ENCODE measurements at regions of chr18 and their contacts with region 1.

Region 1: GRCh38 chr18:76252880-76253279 is 242.2 kb downstream of the ZNF516 start:
- DNase-seq: no peak
- ATAC-seq: no peak
- H3K4me3 ChIP-seq: no peak overlapping the region
- H3K4me3 Mint-ChIP-seq: no peak overlapping the region
- H3K27ac ChIP-seq: no peak overlapping the region
- H3K27ac Mint-ChIP-seq: no peak overlapping the region
- H3K4me1 ChIP-seq: no peaks in the 10 kb centered on the region
- H3K4me1 Mint-ChIP-seq: no peaks in the 10 kb centered on the region
- H3K27me3 ChIP-seq: no peaks in the 10 kb centered on the region
- H3K27me3 Mint-ChIP-seq: peaks cover 9 to 17% (median 10%) of the 10 kb centered on the region in 5 donors

Region 2: DNA sequence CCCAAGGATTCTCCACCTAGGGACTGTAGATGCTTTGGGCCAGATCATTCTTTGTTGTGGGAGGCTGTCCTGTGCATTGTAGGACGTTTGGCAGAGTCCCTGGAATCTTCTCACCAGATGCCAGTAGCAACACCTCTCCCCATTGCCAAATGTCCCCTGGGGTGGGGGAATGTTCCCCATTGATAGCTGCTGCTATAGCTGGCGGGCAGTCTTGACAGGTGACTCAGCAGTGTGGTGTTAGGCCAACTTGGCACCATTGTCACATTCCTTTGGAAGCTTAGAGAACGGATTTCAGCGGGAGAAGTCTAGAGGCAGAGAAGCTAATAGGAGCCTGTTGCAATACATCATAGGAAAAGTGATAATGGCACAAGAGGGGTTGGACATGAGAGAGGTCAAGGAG is 329.7 kb before region 1 on chr18:
- CTCF ChIA-PET with region 1: no interaction called
- POLR2A ChIA-PET with region 1: no interaction called
- intact Hi-C with region 1: no loop called
- DNase-seq: no peak
- ATAC-seq: no peak
- H3K4me3 ChIP-seq: no peak overlapping the region
- H3K4me3 Mint-ChIP-seq: no peak overlapping the region
- H3K27ac ChIP-seq: no peak overlapping the region
- H3K27ac Mint-ChIP-seq: no peak overlapping the region
- H3K4me1 ChIP-seq: no peaks in the 10 kb centered on the region
- H3K4me1 Mint-ChIP-seq: no peaks in the 10 kb centered on the region
- H3K27me3 ChIP-seq: no peaks in the 10 kb centered on the region
- H3K27me3 Mint-ChIP-seq: peaks cover 0 to 20% (median 11%) of the 10 kb centered on the region in 5 donors

Region 3: DNA sequence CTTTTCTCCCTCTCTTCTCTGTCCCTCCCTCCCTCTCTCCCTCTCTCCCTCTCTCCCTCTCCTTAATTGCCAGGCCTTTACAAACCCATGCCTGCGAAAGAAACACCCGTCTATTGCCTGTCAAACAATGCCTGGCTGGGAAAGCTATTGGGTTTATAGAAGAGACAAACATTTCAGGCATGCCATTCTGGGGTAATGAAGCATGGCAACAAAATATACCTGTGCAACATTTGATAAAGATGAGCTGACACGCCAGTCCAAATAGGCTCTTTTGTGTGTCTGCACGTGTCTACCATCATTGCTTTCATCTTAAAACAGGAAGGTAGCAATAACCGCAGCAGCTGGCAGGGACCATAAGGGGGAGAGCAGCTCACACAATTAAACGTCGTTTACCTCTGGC is 39.9 kb before region 1 on chr18:
- CTCF ChIA-PET with region 1: no interaction called
- POLR2A ChIA-PET with region 1: no interaction called
- intact Hi-C with region 1: loop called in 1 of 2 experiments (anchors 2 kb)
- DNase-seq: peak in 6 of 9 donors; percentile 14 to 61 (median 44)
- ATAC-seq: peak; percentile 60
- H3K4me3 ChIP-seq: no peak overlapping the region
- H3K4me3 Mint-ChIP-seq: peak overlapping the region in 6 of 10 donors; percentile 3 to 48 (median 28)
- H3K27ac ChIP-seq: no peak overlapping the region
- H3K27ac Mint-ChIP-seq: peak overlapping the region in 2 of 9 donors; percentile 6 to 9
- H3K4me1 ChIP-seq: peaks cover 0 to 6% of the 10 kb centered on the region in 2 donors
- H3K4me1 Mint-ChIP-seq: peaks cover 2 to 21% (median 20%) of the 10 kb centered on the region in 7 donors
- H3K27me3 ChIP-seq: no peaks in the 10 kb centered on the region
- H3K27me3 Mint-ChIP-seq: peaks cover 0 to 23% (median 4%) of the 10 kb centered on the region in 5 donors

Measured in naive thymus-derived CD4-positive, alpha-beta T cell (primary cell).